ENCODE measurements at regions of chr11 and their contacts with region 1.

Region 1: GRCh38 chr11:88543902-88544655 is 206.5 kb upstream of the CTSC start:
- DNase-seq: peak; percentile 61
- CTCF ChIP-seq: peak; percentile 93

Region 2: DNA sequence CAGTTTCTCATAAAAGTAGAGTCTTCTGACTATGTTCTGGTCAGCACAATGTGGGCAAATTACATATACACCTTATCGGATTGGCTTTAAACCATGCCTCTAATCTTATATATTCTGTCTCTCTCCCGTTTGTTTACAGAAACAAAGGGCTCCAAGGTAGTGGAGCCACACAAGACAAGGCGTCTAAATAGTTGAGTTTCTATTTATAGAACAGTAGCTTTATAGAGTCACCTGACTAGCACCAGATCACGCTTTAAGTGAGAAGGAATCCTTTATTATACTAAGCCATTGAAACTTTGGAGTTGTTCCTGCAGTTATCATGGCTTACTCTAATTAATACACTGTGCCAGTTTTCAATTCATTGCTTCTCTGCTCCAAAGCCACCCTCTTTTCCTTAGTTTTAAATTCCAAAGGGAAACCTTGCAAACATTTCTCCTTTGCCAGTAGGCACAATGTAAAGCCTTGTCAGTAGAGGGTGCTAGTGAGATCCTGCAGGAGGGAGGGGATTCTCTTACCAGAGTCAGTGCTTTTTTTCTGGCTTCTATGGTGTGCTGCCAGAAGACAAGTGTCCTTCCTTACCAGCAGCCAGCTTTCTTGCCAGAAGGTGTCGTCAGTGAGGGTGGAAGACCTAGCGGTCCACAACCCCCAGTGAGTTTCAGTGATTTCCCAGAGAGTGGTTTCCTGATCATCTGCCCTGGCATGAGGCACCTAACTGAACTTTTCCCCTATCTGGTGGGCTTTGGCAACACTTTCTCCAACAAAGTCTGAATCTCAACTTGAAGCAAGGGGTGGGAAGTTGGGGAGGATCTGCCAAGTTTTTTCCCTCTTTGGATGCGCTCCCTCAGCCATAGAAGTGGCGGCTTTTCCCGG is 440.5 kb before region 1 on chr11:
- CTCF ChIA-PET with region 1: interaction called, 19 read pairs
- POLR2A ChIA-PET with region 1: no interaction called
- DNase-seq: peak; percentile 25
- CTCF ChIP-seq: peak; percentile 70

Region 3: GRCh38 chr11:88169471-88169870 is 374.6 kb before region 1 on chr11:
- CTCF ChIA-PET with region 1: interaction called, 12 read pairs
- POLR2A ChIA-PET with region 1: no interaction called
- DNase-seq: no peak
- CTCF ChIP-seq: no peak

Region 4: DNA sequence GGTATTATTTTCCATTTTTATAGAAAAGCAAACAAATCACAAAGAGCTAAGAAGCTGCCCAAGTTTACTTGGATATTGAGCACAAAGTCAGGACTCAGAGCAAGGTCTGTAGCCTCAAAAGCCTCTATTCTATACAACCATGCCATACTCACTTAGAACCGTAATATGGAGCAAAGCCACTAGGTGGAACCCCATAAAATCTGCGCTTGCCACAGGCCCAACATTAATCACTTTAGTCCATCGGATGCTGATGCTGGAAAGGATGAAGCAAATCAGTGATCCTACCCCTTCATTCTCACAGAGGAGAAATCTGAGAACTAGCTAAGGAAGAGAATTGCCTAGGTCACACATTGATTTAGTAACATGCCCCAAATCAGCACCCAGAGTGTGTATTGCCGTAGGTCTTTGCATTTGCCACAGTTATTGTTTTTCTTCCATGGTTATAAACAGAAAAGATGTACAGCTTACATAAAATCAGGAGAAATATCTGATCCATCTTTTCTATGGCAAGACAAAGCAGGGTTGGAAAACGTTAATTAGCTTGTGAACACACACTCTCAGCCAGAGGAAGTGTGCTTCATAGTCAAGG is 312.1 kb before region 1 on chr11:
- CTCF ChIA-PET with region 1: interaction called, 15 read pairs
- POLR2A ChIA-PET with region 1: no interaction called
- DNase-seq: peak; percentile 38
- CTCF ChIP-seq: peak; percentile 28

Region 5: DNA sequence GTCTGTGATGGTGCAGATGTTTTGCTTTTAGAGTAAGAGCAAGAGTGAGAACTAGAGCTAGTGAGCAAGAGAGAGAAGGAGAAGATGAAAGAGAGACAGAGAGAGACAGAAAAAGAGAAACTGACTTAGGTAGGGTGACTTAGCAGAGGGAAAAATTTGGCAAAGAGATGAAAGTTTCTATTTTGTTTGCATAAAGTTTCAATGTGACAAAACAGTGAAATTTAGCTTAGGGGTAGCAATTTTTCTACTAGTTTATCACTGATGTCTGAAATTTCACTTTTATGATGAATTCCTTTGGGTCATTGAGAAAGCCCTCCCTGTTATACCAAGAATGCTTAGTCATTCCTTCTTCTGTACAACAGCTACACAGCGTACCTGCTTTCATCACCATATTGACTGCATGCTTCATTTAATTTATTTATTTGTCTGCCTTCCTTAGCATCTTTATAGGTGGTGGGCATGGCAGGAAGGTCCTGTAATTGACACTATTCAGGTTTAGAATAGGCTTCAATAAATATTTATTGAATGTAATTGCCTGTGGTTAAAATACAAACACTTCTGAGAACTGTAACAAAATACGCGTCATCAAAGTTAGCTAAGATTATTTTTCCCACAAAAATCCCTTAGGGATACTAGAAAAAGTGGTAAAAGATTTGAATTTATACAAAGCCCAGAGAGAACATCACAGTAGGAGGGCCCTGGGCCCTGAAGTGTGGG is 186.6 kb before region 1 on chr11:
- CTCF ChIA-PET with region 1: no interaction called
- POLR2A ChIA-PET with region 1: no interaction called
- DNase-seq: peak; percentile 33
- CTCF ChIP-seq: no peak

Region 6: DNA sequence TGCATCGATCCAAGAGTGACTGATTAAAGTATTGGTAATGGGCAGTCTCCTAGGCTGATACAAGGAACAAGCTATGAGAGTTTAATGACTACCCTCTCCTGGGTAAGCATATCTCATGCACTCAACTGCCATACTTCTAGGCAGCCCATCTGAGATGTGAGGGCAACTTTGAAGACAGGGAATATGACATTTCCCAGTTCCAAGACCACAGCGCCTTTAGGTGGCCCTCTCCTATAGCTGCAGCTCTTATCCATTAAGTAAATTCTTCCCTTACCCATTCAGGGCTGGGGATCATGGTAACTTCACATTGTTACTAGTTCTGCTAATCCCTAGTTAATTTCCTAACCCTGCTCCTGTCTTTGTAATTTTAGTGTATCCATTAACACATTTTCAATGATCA is 49.2 kb before region 1 on chr11:
- CTCF ChIA-PET with region 1: no interaction called
- POLR2A ChIA-PET with region 1: no interaction called
- DNase-seq: no peak
- CTCF ChIP-seq: peak; percentile 12

Region 7: GRCh38 chr11:88569342-88569741 is 25.3 kb after region 1 on chr11:
- CTCF ChIA-PET with region 1: no interaction called
- POLR2A ChIA-PET with region 1: no interaction called
- DNase-seq: no peak
- CTCF ChIP-seq: no peak